Heart right ventricle (tissue), 16 donors: ENCODE measurements at regions of chr9 and their contacts with region 1.

Region 1: DNA sequence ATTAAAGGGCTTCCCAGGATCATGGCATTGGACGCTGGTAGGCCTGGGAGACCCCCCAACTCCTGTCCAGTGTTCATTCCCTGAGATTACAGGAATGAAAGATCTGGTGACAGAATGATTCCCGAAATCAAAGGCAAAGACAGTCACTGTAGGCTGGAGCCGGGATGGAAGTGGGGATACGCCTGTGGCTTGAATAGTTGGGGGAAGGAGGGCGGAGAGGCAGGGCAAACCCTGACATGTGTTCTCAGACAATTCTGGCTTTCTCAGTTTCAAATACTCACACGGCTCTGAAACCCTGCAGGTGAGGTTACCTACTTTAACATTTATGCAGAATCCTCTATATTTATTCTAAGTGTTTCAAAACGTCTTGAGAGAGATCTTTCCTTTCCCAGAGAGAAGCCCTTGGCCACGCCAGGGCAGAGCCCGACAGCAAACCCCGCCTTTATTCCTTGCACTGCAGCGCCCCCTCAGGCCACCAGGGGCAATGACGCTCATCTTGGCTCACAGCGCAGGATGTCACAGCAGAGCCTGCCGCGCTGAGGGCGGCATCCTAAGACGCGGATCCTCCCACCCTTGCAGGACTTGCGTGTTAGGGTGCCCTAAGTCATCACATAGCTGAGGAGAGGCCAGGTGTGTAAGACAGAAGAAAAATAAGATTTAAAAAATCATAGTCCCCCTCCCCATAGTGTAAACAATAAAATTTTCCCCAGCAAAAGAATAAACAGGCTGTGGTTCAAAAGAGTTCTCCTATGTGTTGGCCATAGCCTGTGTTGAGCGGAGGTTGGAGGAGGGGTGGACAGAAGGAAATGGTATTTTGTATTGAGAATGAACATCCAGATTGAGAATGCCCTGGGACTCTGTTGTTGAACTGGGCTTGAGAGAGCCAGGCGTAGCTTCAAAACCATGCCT is 284.5 kb downstream of the NTRK2 start:
- DNase-seq: peak; percentile 78 to 82
- ATAC-seq: peak; percentile 93 to 97 (median 96)
- H3K4me3 ChIP-seq: no peak overlapping the region
- H3K27ac ChIP-seq: no peak overlapping the region
- H3K4me1 ChIP-seq: peaks cover 0 to 32% (median 5%) of the 10 kb centered on the region in 9 donors
- H3K27me3 ChIP-seq: no peaks in the 10 kb centered on the region
- CTCF ChIP-seq: peak; percentile 86 to 97 (median 96)

Region 2: GRCh38 chr9:84404095-84404686 is 549.9 kb before region 1 on chr9:
- intact Hi-C with region 1: loop called in 8 of 10 experiments (anchors 5 to 10 kb)
- DNase-seq: no peak
- ATAC-seq: no peak
- H3K4me3 ChIP-seq: no peak overlapping the region
- H3K27ac ChIP-seq: no peak overlapping the region
- H3K4me1 ChIP-seq: no peaks in the 10 kb centered on the region
- H3K27me3 ChIP-seq: peaks cover 0 to 4% (median 0%) of the 10 kb centered on the region in 7 donors
- CTCF ChIP-seq: peak; percentile 33 to 69 (median 58)

Region 3: GRCh38 chr9:84697509-84698114 is 256.4 kb before region 1 on chr9:
- intact Hi-C with region 1: loop called in 8 of 10 experiments (anchors 1 to 5 kb)
- DNase-seq: peak; percentile 67 to 74
- ATAC-seq: peak; percentile 45 to 92 (median 82)
- H3K4me3 ChIP-seq: no peak overlapping the region
- H3K27ac ChIP-seq: no peak overlapping the region
- H3K4me1 ChIP-seq: peaks cover 0 to 8% (median 0%) of the 10 kb centered on the region in 9 donors
- H3K27me3 ChIP-seq: peaks cover 0 to 4% (median 0%) of the 10 kb centered on the region in 7 donors
- CTCF ChIP-seq: peak; percentile 44 to 82 (median 73)

Region 4: GRCh38 chr9:84781458-84781857 is 172.6 kb before region 1 on chr9:
- intact Hi-C with region 1: loop called in 1 of 10 experiments (anchors 10 kb)
- DNase-seq: no peak
- ATAC-seq: no peak
- H3K4me3 ChIP-seq: no peak overlapping the region
- H3K27ac ChIP-seq: no peak overlapping the region
- H3K4me1 ChIP-seq: peaks cover 0 to 12% (median 0%) of the 10 kb centered on the region in 9 donors
- H3K27me3 ChIP-seq: peaks cover 0 to 5% (median 3%) of the 10 kb centered on the region in 7 donors
- CTCF ChIP-seq: peak in 8 of 9 donors; percentile 21 to 52 (median 37)

Region 5: DNA sequence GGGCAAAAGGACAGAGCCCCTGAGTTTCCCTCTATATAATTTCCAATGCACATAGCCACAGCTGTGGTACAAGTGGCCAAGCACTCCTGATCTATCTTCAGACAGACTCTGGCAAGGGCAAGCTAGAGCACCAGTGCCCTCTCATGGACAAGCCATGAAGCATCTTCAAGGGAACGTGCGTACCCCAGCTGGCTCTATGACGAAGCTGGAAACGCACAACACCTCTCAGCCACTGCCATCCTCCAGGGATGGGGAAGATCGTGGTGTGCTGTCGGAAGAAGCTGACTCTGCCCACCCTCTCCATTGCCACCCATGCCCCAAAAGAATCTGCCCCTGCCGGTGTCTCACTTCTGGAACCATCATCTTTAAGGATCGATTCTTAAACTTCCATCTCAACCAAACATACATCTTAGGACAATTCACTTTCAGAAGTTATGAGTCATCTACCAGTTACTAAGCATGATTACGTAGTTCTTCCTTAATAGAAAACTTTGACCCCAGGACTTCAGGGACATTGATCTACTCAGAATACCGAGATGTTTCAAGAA is 304.8 kb after region 1 on chr9:
- intact Hi-C with region 1: loop called in 1 of 10 experiments (anchors 10 kb)
- DNase-seq: peak; percentile 24 to 50
- ATAC-seq: peak; percentile 50 to 95 (median 85)
- H3K4me3 ChIP-seq: peak overlapping the region in 1 of 10 donors; percentile 10
- H3K27ac ChIP-seq: no peak overlapping the region
- H3K4me1 ChIP-seq: peaks cover 0 to 12% (median 0%) of the 10 kb centered on the region in 9 donors
- H3K27me3 ChIP-seq: peaks cover 0 to 5% (median 0%) of the 10 kb centered on the region in 7 donors
- CTCF ChIP-seq: peak; percentile 35 to 78 (median 71)